ENCODE measurements at regions of chr6 and their contacts with region 1.

Region 1: GRCh38 chr6:70686548-70687133 is 19.0 kb downstream of the SMAP1 start:
- DNase-seq: peak; percentile 64
- ATAC-seq: 0 out of 2 replicates have a peak, but pooled peaks have one; percentile 35
- H3K4me3 ChIP-seq: no peak overlapping the region
- H3K27ac ChIP-seq: no peak overlapping the region
- H3K4me1 ChIP-seq: peaks cover 13% of the 10 kb centered on the region
- H3K27me3 ChIP-seq: no peaks in the 10 kb centered on the region
- CTCF ChIP-seq: peak; percentile 72

Region 2: GRCh38 chr6:70310063-70310694 is 376.5 kb before region 1 on chr6:
- CTCF ChIA-PET with region 1: no interaction called
- POLR2A ChIA-PET with region 1: no interaction called
- intact Hi-C with region 1: loop called (anchors 5 kb)
- DNase-seq: peak; percentile 74
- ATAC-seq: no peak
- H3K4me3 ChIP-seq: no peak overlapping the region
- H3K27ac ChIP-seq: no peak overlapping the region
- H3K4me1 ChIP-seq: peaks cover 10% of the 10 kb centered on the region
- H3K27me3 ChIP-seq: peaks cover 32% of the 10 kb centered on the region
- CTCF ChIP-seq: peak; percentile 80

Region 3: DNA sequence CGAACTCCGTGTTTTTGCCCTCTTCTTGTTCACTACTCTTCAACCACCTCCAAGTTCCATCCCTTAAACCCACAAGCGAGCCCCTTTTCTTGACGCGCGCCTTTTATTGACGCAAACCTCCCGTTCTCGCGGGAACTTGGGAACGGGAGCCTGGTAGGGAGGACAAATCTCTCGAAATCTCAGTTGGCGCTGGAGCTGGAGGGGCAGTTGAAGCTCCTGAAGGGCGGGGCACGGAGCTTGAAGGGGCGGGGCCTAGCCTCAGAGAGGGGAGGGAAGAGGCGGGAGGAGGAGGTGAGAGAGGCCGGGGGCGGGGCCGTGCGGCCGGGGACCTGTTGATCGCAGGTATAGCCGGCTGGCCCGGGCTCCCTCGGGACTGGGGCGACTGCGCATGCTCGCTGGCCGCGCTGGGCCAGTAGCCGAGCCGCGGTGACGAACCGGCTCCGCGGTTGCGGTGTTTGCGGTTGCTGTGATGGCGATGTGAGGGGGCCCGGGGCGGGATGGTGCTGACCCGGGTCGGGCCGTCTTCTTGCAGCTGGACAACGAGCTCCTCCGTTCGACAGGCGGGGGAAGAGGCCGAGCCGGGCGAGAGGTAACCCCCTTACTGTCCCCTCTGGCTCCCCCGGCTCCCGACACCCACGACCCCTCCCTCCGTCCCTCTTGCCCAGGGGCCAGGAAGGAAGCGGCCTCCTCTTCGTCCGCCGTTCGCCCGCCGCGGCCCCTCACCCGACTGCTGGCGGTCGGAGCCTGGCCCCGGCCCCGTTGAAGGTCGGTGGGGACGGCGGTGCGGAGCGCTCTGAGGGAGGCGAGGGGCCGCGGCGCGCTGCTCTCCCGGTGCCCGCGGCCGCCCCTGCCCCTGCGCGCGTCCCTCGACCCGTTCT is 273.3 kb before region 1 on chr6 and contains the start of gene FAM135A:
- CTCF ChIA-PET with region 1: interaction called, 7 read pairs
- POLR2A ChIA-PET with region 1: interaction called, 4 read pairs
- intact Hi-C with region 1: loop called (anchors 5 kb)
- DNase-seq: peak; percentile 97
- ATAC-seq: peak; percentile 91
- H3K4me3 ChIP-seq: peak within 1 kb of the TSS; percentile 90
- H3K27ac ChIP-seq: no peak within 1 kb of the TSS
- H3K4me1 ChIP-seq: peaks cover 14% of the 10 kb centered on the region
- H3K27me3 ChIP-seq: no peaks in the 10 kb centered on the region
- CTCF ChIP-seq: no peak
- total RNA-seq, gene FAM135A: 15.5 and 18.1 TPM in 2 replicates

Region 4: DNA sequence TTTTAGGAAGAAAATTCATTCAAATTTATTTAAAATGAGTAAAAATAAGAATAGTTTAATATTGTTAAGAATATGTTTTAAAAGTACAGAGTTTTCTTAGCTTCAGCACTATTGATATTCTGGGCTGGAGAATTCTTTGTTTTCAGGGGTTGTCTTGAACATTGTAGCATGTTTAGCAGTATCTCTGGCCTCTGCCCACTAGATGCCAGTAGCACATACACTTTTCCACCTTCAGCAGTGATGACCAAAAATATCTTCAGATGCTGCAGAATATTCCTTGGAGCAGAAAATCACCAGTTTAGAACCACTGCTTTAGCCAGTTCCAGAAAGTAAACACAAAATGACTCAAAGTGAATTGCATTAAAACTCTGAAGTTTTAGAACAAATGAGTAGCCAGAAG is 139.3 kb before region 1 on chr6:
- CTCF ChIA-PET with region 1: no interaction called
- POLR2A ChIA-PET with region 1: no interaction called
- intact Hi-C with region 1: loop called (anchors 1 kb)
- DNase-seq: peak; percentile 38
- ATAC-seq: peak; percentile 89
- H3K4me3 ChIP-seq: no peak overlapping the region
- H3K27ac ChIP-seq: no peak overlapping the region
- H3K4me1 ChIP-seq: peaks cover 3% of the 10 kb centered on the region; the same call in 1 of the 2 replicates
- H3K27me3 ChIP-seq: no peaks in the 10 kb centered on the region
- CTCF ChIP-seq: peak; percentile 52

Region 5: DNA sequence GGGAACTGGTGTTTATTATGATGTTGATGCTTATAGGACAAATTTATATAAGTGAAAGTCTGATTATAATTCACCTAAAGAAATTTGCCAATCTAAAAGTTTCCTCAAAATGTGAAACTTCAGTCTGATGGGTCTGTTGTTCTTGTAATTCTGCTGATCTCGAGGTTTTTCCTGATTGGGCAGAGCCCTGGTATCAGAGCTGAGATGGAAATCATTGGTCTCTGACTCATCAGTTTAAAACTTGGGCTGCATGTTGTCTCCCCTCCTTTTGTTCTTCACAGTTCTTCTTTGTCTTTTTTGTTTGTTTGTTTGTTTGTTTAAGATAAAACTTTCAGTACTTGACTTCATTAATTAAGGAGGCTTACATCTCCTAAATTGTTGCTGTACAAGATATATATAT is 13.0 kb before region 1 on chr6:
- CTCF ChIA-PET with region 1: no interaction called
- POLR2A ChIA-PET with region 1: no interaction called
- intact Hi-C with region 1: loop called (anchors 1 kb)
- DNase-seq: peak; percentile 21
- ATAC-seq: no peak
- H3K4me3 ChIP-seq: no peak overlapping the region
- H3K27ac ChIP-seq: no peak overlapping the region
- H3K4me1 ChIP-seq: peaks cover 12% of the 10 kb centered on the region; the same call in 1 of the 2 replicates
- H3K27me3 ChIP-seq: no peaks in the 10 kb centered on the region
- CTCF ChIP-seq: no peak